Vagina (tissue), 2 donors: ENCODE measurements at regions of chr11 and their contacts with region 1.

Region 1: GRCh38 chr11:45365961-45366618 is 79.9 kb upstream of the SYT13 start:
- DNase-seq: peak in 1 of 2 donors; percentile 64
- H3K4me3 ChIP-seq: no peak overlapping the region
- H3K27ac ChIP-seq: no peak overlapping the region
- H3K4me1 ChIP-seq: peaks cover 10% of the 10 kb centered on the region
- H3K27me3 ChIP-seq: no peaks in the 10 kb centered on the region
- CTCF ChIP-seq: no peak
- POLR2A ChIP-seq: no peak

Region 2: DNA sequence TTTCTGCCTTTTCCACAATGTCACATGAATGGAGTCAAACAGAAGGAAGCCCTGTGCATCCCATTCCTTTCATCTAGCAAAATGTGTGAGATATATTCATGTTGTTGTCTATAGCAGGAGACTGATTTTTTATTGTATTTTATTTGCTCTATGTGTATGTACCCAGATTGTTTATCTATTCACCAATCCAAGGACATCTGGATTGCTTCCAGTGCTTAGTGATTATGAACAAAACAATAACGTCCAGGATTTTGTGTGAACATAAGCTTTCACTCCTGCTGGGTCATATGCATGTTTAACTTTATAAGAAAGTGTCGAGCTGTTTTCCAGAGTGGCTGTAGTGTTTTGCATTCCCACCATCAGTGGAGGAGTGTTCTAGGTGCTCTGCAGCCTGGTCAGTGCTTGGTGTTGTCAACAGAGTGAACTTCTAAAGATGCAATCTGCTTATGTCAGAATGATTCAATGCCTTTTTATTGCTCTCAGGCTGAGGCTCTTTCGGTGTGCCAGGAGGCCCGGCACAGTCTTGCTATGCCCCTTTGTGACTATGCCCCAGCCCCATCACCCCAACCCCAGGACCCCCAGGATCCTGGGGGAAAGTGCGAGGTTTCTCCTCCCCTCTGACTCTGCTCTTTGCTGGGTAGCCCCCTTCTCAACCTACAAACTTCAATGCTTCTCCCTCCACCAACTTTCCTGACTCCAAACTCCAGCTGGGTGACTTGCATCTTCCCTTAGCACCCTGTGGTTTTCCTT is 60.0 kb before region 1 on chr11:
- intact Hi-C with region 1: no loop called
- DNase-seq: peak in 1 of 2 donors; percentile 19
- H3K4me3 ChIP-seq: no peak overlapping the region
- H3K27ac ChIP-seq: no peak overlapping the region
- H3K4me1 ChIP-seq: no peaks in the 10 kb centered on the region
- H3K27me3 ChIP-seq: no peaks in the 10 kb centered on the region
- CTCF ChIP-seq: no peak
- POLR2A ChIP-seq: no peak

Region 3: DNA sequence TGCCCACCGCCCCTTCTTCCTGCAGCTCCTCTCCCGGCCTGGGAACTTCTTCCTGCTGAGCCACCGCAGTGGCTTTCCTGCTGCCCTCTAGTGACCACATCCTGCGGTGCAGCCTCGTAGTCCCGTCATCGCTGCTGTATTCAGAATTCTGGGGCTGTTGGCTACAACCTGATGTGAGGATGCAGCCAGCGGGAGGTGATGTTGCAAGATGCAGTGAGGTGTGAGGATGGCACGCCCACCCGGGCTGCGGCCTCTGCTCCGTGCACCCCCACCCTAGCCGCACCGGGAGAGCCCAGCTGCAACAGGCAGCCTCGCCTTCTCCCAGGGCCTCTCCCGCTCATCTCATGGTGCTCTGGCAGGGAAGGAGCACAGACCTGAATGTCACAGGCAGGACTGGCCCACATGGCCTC is 289.3 kb after region 1 on chr11:
- intact Hi-C with region 1: loop called (anchors 10 kb)
- DNase-seq: no peak
- H3K4me3 ChIP-seq: no peak overlapping the region
- H3K27ac ChIP-seq: no peak overlapping the region
- H3K4me1 ChIP-seq: peaks cover 23% of the 10 kb centered on the region
- H3K27me3 ChIP-seq: no peaks in the 10 kb centered on the region
- CTCF ChIP-seq: peak; percentile 75 to 79 (median 77)
- POLR2A ChIP-seq: no peak